GM10248 (cell line): ENCODE measurements at regions of chr20 and their contacts with region 1.

Region 1: DNA sequence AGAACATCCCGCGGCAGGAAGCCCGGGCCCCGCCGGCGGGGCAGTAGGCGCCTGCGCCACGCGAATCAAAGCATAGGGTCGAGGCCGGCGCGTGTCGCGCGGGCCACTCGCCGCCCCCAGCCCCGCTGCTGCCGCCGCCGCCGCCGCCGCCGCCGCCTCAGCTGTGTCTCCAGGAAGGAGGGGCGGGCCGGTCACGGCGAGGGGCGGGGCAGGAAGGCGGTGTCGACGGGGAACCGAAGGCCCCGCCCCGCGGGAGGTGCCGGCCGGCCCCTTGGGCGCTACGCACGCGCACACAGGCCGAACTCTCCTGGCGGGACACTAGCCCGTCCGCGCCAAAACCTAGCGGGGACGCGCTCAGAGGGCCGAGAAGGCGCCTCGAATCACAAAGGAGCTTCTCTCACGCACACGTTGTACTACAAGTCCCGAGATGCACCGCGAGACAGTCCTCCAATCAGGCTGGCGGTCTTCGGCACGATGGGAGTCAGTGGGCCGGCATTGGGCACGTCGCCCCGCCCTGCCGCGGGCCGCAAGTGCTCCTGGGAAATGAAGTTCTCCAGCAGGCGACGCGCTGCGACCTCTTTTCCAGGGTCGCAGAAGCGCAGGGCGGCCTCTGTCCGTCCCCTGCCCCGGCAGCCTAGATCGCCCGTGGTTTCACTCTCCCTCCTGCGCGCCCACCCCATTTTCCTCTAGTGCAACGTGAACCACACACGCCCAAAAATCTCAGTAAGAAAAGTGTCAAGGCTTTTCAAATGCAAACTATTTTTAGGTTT is at the start of gene RALGAPA2:
- DNase-seq: peak; percentile 96
- CTCF ChIP-seq: no peak

Region 2: GRCh38 chr20:20528866-20529265 is 183.8 kb before region 1 on chr20:
- CTCF ChIA-PET with region 1: no interaction called
- POLR2A ChIA-PET with region 1: no interaction called
- DNase-seq: no peak
- CTCF ChIP-seq: no peak

Region 3: DNA sequence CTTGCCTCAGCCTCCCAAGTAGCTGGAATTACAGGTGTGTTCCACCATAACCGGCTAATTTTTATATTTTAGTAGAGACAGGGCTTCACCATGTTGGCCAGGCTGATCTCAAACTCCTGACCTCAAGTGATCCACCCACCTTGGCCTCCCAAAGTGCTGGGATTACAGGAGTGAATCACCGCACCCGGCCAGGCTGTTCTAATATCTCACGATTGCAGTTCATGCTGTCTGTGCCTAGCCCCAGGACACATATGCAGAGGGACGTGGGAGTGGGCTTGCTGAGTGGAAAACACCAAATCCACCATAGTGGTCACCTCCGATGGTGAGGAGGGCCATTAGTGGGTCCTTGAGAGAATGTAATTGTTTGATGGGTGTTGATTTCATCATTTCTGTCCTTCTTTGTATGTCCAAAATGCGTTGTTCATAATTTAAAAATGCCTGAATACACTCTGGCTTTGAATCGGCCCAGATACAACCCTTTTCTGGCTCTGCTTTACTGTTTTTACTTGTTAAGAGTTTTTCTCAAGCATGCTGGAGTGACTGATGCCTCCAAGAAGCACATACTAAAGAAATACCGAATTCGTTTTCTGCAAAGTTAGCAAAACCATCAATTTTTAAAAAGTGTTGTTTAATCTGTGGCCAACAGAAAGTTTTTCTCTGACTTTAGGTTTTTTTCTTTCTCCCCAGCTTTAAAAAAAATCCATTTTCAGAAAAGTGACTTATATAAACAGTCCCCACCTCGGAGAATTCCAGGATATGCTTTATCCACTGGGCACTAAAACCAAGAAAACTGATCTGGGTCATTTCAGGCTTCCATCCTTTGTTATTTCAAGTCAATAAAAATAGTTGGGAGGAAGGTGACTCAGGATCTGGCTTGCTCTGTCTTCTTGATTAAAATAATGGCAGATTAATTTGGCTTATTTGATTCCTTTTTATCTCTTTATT is 18.6 kb after region 1 on chr20:
- CTCF ChIA-PET with region 1: interaction called, 12 read pairs
- POLR2A ChIA-PET with region 1: no interaction called
- DNase-seq: no peak
- CTCF ChIP-seq: no peak